ENCODE measurements at regions of chr17 and their contacts with region 1.

Region 1: GRCh38 chr17:72120642-72121163 is at the start of gene SOX9:
- DNase-seq: peak; percentile 91
- H3K4me3 ChIP-seq: peak within 1 kb of the TSS; percentile 30 to 66 (median 58)
- H3K27ac ChIP-seq: peak within 1 kb of the TSS; percentile 75 to 88 (median 87)
- H3K4me1 ChIP-seq: peaks cover 0 to 57% (median 30%) of the 10 kb centered on the region in 4 donors
- H3K27me3 ChIP-seq: peaks cover 85% of the 10 kb centered on the region
- CTCF ChIP-seq: no peak
- EP300 ChIP-seq: no peak
- POLR2A ChIP-seq: peak; percentile 97
- total RNA-seq, gene SOX9: 35.2 to 55.7 (median 42.3) TPM

Region 2: GRCh38 chr17:70636517-70637133 is 1484.1 kb before region 1 on chr17:
- in situ Hi-C with region 1: no loop called
- intact Hi-C with region 1: loop called (anchors 10 kb)
- DNase-seq: no peak
- H3K4me3 ChIP-seq: no peak overlapping the region
- H3K27ac ChIP-seq: no peak overlapping the region
- H3K4me1 ChIP-seq: no peaks in the 10 kb centered on the region
- H3K27me3 ChIP-seq: no peaks in the 10 kb centered on the region
- CTCF ChIP-seq: peak; percentile 78 to 91 (median 82)
- EP300 ChIP-seq: no peak
- POLR2A ChIP-seq: no peak

Region 3: GRCh38 chr17:71118039-71118438 is 1002.7 kb before region 1 on chr17:
- in situ Hi-C with region 1: loop called in 1 of 4 experiments (anchors 10 kb)
- intact Hi-C with region 1: no loop called
- DNase-seq: no peak
- H3K4me3 ChIP-seq: no peak overlapping the region
- H3K27ac ChIP-seq: no peak overlapping the region
- H3K4me1 ChIP-seq: no peaks in the 10 kb centered on the region
- H3K27me3 ChIP-seq: no peaks in the 10 kb centered on the region
- CTCF ChIP-seq: peak; percentile 14 to 50 (median 29)
- EP300 ChIP-seq: no peak
- POLR2A ChIP-seq: no peak

Region 4: GRCh38 chr17:71460943-71461342 is 659.8 kb before region 1 on chr17:
- in situ Hi-C with region 1: loop called in 3 of 4 experiments (anchors 10 to 25 kb)
- intact Hi-C with region 1: no loop called
- DNase-seq: peak; percentile 34
- H3K4me3 ChIP-seq: no peak overlapping the region
- H3K27ac ChIP-seq: no peak overlapping the region
- H3K4me1 ChIP-seq: no peaks in the 10 kb centered on the region
- H3K27me3 ChIP-seq: no peaks in the 10 kb centered on the region
- CTCF ChIP-seq: peak; percentile 18 to 38 (median 30)
- EP300 ChIP-seq: no peak
- POLR2A ChIP-seq: no peak

Region 5: GRCh38 chr17:71472809-71473789 is 647.6 kb before region 1 on chr17:
- in situ Hi-C with region 1: loop called (anchors 10 to 25 kb)
- intact Hi-C with region 1: no loop called
- DNase-seq: no peak
- H3K4me3 ChIP-seq: no peak overlapping the region
- H3K27ac ChIP-seq: no peak overlapping the region
- H3K4me1 ChIP-seq: peaks cover 0 to 5% (median 2%) of the 10 kb centered on the region in 4 donors
- H3K27me3 ChIP-seq: no peaks in the 10 kb centered on the region
- CTCF ChIP-seq: peak; percentile 52 to 66 (median 61)
- EP300 ChIP-seq: no peak
- POLR2A ChIP-seq: no peak

Region 6: DNA sequence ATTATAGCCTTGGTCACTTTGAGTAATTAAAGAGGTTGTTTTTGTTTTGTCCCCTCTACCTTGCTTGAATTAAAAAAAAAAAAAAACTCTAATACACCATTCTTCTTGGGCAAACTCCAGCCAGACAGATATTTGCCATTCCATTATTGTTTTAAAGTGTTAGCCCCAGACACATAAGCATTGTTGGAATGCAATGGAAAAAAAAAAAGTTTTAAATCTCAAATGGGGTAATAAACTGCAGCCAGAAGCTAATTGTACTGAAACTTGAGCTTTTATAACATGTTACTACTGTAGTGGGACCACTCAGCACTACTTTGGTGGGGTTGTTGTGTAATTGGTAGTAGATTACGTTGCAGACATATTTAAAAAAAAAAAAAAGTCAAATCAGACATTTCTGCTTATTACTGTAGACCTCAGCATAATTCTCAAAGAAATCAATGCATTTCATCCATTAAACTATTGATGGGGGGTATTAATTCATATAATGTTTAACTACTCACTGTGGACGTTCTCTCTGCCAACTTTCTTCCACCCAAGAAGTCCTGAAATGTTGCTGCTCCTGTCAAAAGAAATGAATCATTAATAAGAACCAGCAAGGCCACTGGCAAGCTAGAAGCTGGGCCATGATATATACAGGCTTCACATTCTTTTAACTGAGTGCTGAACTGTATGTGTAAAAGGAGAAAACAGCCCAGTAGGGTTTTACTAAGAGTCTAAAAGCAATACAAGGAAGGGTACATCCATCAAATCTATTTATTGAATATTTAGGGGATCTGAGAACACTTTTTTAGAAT is 626.4 kb before region 1 on chr17:
- in situ Hi-C with region 1: loop called in 1 of 4 experiments (anchors 25 kb)
- intact Hi-C with region 1: no loop called
- DNase-seq: no peak
- H3K4me3 ChIP-seq: no peak overlapping the region
- H3K27ac ChIP-seq: no peak overlapping the region
- H3K4me1 ChIP-seq: no peaks in the 10 kb centered on the region
- H3K27me3 ChIP-seq: no peaks in the 10 kb centered on the region
- CTCF ChIP-seq: no peak
- EP300 ChIP-seq: no peak
- POLR2A ChIP-seq: no peak

Measured in transverse colon (tissue), 4 donors.